PC-3 (cell line): ENCODE measurements at regions of chr13 and their contacts with region 1.

Region 1: DNA sequence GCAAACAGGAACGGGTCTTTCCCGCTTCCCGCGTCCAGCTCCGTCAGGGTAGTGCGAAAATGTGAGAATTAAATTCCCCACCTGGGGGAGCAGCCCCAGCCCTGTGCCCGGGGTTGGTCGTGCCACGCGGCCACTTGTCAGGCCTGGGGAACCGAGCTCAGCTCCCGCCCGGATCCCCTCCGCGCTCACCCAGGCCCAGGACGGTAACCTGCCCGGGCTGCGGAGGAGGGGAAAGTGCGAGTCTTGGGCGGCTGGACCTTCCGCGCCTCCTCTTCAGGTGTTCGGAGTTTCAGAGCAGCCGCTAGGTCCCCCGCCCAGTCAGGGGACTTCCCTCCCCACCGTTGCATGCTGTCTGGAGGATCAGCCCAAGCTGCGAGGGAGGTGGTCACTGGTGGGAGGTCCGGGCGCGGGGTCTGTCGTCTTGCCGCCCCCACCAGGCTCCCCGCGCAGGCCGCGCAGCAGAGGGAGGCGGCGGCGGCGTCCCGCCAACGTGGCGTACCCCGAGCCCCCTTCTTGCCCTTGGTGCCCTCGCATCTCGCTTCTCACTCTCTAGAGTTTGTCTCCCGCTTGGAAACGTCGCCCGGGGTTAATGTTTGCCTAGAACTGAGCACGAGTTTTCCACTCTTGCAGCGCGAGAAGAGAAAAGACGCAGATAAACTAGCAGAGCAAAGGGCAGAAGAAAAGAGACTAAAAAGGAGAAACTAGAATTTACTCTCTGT is 8.1 kb downstream of the URAD start:
- DNase-seq: no peak
- ATAC-seq: no peak
- H3K4me3 ChIP-seq: no peak overlapping the region
- H3K27ac ChIP-seq: no peak overlapping the region
- H3K4me1 ChIP-seq: no peaks in the 10 kb centered on the region
- H3K27me3 ChIP-seq: peaks cover 30% of the 10 kb centered on the region
- CTCF ChIP-seq: no peak

Region 2: DNA sequence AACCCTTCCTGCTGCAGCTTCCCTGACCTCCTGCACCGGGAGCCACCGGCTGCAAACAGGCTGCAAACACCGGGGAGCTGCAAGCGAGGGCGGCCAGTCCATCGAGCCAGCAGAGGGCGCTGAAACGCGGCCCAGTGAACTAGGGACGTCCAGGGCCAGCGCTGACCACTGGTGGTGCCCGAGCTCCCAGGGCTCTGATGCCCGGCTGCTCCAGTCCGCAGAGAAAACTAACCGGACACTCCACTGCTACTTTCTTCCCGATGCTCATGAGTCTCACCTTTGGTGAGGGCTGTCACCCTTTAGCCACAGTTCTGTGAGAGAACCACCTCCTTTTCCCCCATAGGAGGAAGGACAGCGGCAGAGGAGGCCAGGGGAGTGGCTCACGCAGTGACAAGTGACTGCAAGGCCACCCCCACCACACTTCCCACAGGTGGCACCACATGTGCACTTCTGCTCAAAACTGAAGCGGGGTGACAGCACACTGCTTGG is 447.2 kb before region 1 on chr13:
- CTCF ChIA-PET with region 1: no interaction called
- POLR2A ChIA-PET with region 1: no interaction called
- intact Hi-C with region 1: loop called (anchors 5 kb)
- DNase-seq: peak; percentile 80
- ATAC-seq: peak; percentile 99
- H3K4me3 ChIP-seq: peak overlapping the region; percentile 53; the same call in 1 of the 2 replicates
- H3K27ac ChIP-seq: no peak overlapping the region
- H3K4me1 ChIP-seq: no peaks in the 10 kb centered on the region
- H3K27me3 ChIP-seq: no peaks in the 10 kb centered on the region
- CTCF ChIP-seq: peak; percentile 92

Region 3: DNA sequence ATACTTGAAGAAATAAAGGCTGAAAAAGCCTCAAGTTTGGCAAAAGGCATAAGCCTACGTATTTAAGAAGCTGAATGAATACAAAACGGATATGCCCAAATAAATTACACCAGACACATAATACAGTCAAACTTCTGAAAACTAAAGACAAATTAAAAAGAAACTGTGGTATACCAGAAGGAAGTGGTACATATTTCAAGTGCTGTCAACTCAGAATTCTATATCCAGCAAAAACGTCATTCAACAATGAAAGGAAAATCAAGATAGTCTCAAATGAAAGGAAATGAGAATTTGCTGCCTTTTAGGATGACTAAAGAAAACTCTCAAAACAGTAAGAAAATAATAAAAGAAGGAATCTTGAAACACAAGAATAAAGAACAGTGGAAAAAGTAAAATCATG is 289.2 kb before region 1 on chr13:
- CTCF ChIA-PET with region 1: no interaction called
- POLR2A ChIA-PET with region 1: no interaction called
- intact Hi-C with region 1: no loop called
- DNase-seq: no peak
- ATAC-seq: no peak
- H3K4me3 ChIP-seq: no peak overlapping the region
- H3K27ac ChIP-seq: no peak overlapping the region
- H3K4me1 ChIP-seq: no peaks in the 10 kb centered on the region
- H3K27me3 ChIP-seq: peaks cover 4% of the 10 kb centered on the region; the same call in 1 of the 2 replicates
- CTCF ChIP-seq: no peak

Region 4: DNA sequence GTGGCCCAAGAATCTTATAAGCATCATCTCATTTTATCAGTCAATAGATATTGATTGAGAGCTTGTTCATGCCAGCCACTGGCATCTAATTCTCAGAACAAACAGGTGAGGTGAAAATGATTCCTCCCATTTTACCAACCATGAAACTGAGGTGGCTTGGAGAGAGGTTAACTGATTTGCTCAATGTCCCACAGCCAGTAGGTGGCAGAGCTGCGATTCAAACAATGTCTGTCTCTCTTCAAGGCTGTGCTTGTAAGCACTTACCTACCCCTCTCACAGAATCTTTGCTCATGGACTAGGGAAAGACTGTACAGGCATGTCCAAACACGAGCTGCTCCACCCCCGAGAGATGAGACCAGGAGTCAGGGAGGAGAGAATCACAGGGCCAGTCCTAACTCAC is 209.6 kb before region 1 on chr13:
- CTCF ChIA-PET with region 1: no interaction called
- POLR2A ChIA-PET with region 1: no interaction called
- intact Hi-C with region 1: loop called (anchors 1 kb)
- DNase-seq: peak; percentile 56
- ATAC-seq: peak; percentile 84
- H3K4me3 ChIP-seq: no peak overlapping the region
- H3K27ac ChIP-seq: no peak overlapping the region
- H3K4me1 ChIP-seq: peaks cover 6% of the 10 kb centered on the region
- H3K27me3 ChIP-seq: 0 out of 2 replicates have a peak, but pooled peaks cover 9% of the 10 kb centered on the region
- CTCF ChIP-seq: peak; percentile 72

Region 5: GRCh38 chr13:27868641-27869435 is 111.6 kb before region 1 on chr13:
- CTCF ChIA-PET with region 1: interaction called, 8 read pairs
- POLR2A ChIA-PET with region 1: no interaction called
- intact Hi-C with region 1: loop called (anchors 1 kb)
- DNase-seq: peak; percentile 42
- ATAC-seq: no peak
- H3K4me3 ChIP-seq: no peak overlapping the region
- H3K27ac ChIP-seq: no peak overlapping the region
- H3K4me1 ChIP-seq: no peaks in the 10 kb centered on the region
- H3K27me3 ChIP-seq: peaks cover 39% of the 10 kb centered on the region
- CTCF ChIP-seq: peak; percentile 74

Region 6: GRCh38 chr13:28031220-28031895 is 50.9 kb after region 1 on chr13:
- CTCF ChIA-PET with region 1: no interaction called
- POLR2A ChIA-PET with region 1: no interaction called
- intact Hi-C with region 1: no loop called
- DNase-seq: no peak
- ATAC-seq: no peak
- H3K4me3 ChIP-seq: no peak overlapping the region
- H3K27ac ChIP-seq: no peak overlapping the region
- H3K4me1 ChIP-seq: peaks cover 5% of the 10 kb centered on the region; the same call in 1 of the 2 replicates
- H3K27me3 ChIP-seq: peaks cover 16% of the 10 kb centered on the region; the same call in 1 of the 2 replicates
- CTCF ChIP-seq: no peak